ENCODE measurements at regions of chr2 and their contacts with region 1.

Region 1: DNA sequence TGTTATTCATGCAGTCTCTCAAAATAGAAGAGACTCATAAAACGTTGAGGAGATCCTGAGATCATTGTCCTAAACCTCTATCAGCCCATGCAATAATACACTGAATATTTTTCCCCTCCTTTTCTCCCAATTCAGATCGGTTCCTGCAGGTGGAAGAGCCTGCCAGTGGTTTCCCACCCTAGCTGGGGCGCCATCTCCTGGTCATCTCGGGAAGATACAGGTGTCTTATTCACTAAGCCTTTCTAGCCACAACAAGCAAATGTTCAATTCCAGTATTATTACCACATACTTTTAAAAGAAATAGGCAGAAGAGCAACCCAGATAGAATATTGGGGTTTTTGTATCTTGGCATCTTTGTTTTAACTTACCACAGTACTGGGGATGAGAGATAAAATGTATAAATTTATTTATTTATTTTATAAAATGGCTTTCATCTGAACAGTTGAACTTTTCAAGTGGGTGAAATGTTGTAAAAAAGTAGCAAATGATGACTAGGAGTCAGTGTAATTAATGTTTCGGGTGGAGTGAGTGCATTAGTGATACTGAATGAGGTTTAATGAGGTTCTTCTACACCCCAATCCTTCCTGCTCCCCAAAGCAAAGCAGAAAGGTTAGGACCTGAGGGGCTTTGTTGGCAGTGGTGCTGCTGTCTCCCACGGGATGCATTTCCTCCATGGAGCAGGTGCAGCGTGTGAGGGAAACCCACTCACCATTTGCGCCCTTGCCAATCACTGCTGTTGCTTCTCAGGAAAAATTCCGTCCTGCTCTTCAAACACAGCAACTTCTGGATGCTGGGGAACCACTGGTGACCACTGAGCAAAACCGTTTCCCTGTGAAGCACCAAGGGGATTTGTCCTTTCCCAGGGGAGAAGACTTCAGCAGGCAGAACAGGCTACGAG is 147.1 kb upstream of the FHL2 start:
- DNase-seq: peak; percentile 39 to 77 (median 68)
- ATAC-seq: peak; percentile 78
- H3K4me3 ChIP-seq: no peak overlapping the region
- H3K4me3 Mint-ChIP-seq: peak overlapping the region; percentile 47
- H3K27ac ChIP-seq: no peak overlapping the region
- H3K27ac Mint-ChIP-seq: no peak overlapping the region
- H3K4me1 ChIP-seq: peaks cover 5% of the 10 kb centered on the region
- H3K4me1 Mint-ChIP-seq: peaks cover 14% of the 10 kb centered on the region
- H3K27me3 ChIP-seq: no peaks in the 10 kb centered on the region
- H3K27me3 Mint-ChIP-seq: peaks cover 3% of the 10 kb centered on the region
- CTCF ChIP-seq: peak; percentile 96

Region 2: GRCh38 chr2:105563000-105563719 is 17.2 kb after region 1 on chr2:
- CTCF ChIA-PET with region 1: interaction called, 12 read pairs
- POLR2A ChIA-PET with region 1: interaction called, 3 read pairs
- intact Hi-C with region 1: no loop called
- DNase-seq: no peak
- ATAC-seq: no peak
- H3K4me3 ChIP-seq: no peak overlapping the region
- H3K4me3 Mint-ChIP-seq: no peak overlapping the region
- H3K27ac ChIP-seq: no peak overlapping the region
- H3K27ac Mint-ChIP-seq: no peak overlapping the region
- H3K4me1 ChIP-seq: no peaks in the 10 kb centered on the region
- H3K4me1 Mint-ChIP-seq: peaks cover 8% of the 10 kb centered on the region
- H3K27me3 ChIP-seq: no peaks in the 10 kb centered on the region
- H3K27me3 Mint-ChIP-seq: no peaks in the 10 kb centered on the region
- CTCF ChIP-seq: no peak